H1 (cell line): ENCODE measurements at regions of chr7 and their contacts with region 1.

Region 1: DNA sequence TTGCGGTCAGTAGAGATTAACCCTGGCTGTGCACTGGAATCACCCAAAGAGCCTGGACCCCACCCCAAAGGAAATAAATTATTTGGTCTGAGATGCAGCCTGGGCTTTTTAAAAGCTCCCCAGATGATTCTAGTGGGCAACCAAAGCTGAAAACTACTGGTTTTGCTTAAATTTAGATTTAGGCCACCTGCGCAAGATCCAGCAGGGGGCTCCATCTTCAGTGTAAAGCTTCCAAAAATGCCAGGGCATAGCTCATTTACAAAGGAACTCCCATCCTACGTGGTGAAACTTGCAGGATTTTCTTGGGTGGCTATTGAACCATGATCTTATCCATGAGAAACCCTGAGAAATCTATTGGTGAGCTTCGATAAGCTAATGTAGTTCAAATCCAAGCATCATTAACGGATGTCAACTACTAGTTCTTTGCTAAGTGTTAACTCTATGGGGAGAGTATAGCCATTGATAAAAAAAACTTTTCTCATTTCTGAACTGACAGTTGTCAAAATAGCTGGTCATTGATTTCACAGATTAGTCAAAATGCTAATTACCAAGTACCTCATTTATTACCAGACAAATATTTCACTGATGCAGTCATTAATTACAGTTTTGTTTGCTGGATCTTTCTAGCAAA is 315.3 kb downstream of the LHFPL3 start:
- DNase-seq: peak; percentile 7 to 48
- H3K4me3 ChIP-seq: no peak overlapping the region
- H3K27ac ChIP-seq: no peak overlapping the region
- H3K4me1 ChIP-seq: no peaks in the 10 kb centered on the region
- H3K27me3 ChIP-seq: no peaks in the 10 kb centered on the region
- CTCF ChIP-seq: peak; percentile 19 to 73 (median 63)
- EP300 ChIP-seq: no peak
- POLR2A ChIP-seq: no peak
- RAD21 ChIP-seq: peak; percentile 69 to 79

Region 2: DNA sequence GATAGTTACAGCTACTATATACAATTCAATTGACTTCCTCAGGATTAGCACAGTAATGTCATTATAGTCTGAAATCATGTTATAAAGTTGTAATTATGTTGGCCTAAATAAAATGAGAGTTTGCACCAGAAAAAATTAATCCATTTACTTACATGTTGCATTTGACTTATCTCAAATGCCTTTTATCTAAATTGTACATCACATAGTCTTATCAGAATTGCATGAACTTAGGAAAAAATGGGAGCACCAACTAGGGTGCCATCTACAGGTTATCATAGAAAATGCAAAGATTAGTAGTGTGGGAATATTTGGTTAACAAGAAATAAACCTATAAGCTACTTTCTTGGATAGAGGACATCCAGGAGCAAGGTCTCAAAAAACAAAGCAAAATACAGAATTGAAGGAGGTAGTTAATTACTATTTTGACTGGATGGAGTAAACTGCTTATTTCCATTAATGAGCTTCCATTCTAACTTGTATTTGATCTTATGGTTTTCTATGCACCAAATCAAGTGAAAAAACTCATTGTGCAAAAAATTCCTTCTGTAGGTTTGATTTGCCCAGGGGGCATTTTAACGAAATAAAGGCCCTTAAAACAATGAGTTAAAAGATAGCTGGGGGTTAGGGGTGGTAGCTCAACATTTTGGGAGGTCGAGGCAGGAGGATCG is 375.9 kb before region 1 on chr7:
- CTCF ChIA-PET with region 1: interaction called, 10 read pairs
- POLR2A ChIA-PET with region 1: no interaction called
- DNase-seq: no peak
- H3K4me3 ChIP-seq: no peak overlapping the region
- H3K27ac ChIP-seq: no peak overlapping the region
- H3K4me1 ChIP-seq: no peaks in the 10 kb centered on the region
- H3K27me3 ChIP-seq: no peaks in the 10 kb centered on the region
- CTCF ChIP-seq: peak in 1 of 3 experiments; percentile 43; a peak in 1 of 4 replicates
- EP300 ChIP-seq: no peak
- POLR2A ChIP-seq: no peak
- RAD21 ChIP-seq: peak in 1 of 2 experiments; percentile 14; a peak in 1 of 4 replicates

Region 3: GRCh38 chr7:104341546-104341945 is 302.2 kb before region 1 on chr7:
- CTCF ChIA-PET with region 1: interaction called, 12 read pairs
- POLR2A ChIA-PET with region 1: no interaction called
- DNase-seq: peak in 1 of 2 experiments; percentile 61
- H3K4me3 ChIP-seq: no peak overlapping the region
- H3K27ac ChIP-seq: no peak overlapping the region
- H3K4me1 ChIP-seq: no peaks in the 10 kb centered on the region
- H3K27me3 ChIP-seq: no peaks in the 10 kb centered on the region
- CTCF ChIP-seq: peak; percentile 70 to 81 (median 79)
- EP300 ChIP-seq: no peak
- POLR2A ChIP-seq: no peak
- RAD21 ChIP-seq: peak; percentile 91 to 94

Region 4: DNA sequence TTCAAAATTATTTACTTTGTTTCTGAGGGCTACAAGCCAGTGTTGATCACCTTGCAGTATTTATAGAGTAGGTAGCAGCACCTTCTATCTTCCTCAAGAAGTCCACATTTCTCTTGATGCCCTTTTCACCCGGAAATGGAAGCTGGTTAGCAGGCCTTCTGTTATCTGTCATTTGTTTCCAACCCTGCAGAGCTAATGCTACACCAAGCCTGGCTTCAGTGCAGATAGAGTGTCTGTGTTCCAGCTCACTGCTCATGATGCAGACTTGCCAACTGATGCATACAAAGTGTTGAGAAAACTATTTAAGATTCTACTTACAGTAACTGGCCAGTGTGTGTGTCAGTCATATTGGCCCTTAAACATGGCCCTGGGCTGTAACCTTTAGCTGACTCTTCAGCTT is 14.3 kb before region 1 on chr7:
- CTCF ChIA-PET with region 1: interaction called, 49 read pairs
- POLR2A ChIA-PET with region 1: no interaction called
- DNase-seq: no peak
- H3K4me3 ChIP-seq: no peak overlapping the region
- H3K27ac ChIP-seq: no peak overlapping the region
- H3K4me1 ChIP-seq: no peaks in the 10 kb centered on the region
- H3K27me3 ChIP-seq: no peaks in the 10 kb centered on the region
- CTCF ChIP-seq: no peak
- EP300 ChIP-seq: no peak
- POLR2A ChIP-seq: no peak
- RAD21 ChIP-seq: no peak